ENCODE measurements at regions of chr17 and their contacts with region 1.

Region 1: DNA sequence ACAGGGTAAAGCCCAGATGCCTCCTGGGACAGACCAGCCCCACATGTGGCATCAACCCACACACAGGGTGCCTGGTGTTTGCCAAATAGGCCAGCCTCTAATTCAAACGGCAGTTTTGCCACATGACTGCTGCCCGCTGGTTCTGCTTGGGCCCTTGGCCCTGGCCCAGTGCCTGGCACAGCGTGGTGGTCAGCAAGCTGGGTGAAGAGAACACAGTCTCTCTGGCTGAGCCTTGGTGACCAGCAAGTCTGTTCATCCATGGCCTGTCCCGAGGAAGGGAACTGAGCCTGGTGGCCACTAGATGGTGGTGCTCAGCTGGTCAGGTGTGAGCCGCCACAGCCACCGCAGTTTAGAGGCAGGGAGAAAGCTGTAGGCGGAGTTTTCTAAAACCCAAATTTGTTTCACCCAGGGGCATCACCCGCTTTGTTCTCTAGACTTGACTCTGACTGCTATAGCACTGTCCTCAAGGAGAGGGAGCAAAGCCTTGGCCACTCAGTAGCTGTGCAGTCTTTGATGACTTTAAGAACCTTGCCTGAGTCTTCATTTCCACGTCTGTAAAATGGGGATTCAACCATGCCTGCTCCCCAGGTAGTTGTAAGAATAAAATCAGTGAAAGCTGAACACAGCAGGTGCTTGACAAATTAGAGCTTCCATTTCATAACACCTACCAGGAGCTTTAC is 4.7 kb upstream of the GFAP start:
- DNase-seq: peak; percentile 84 to 86
- H3K4me3 ChIP-seq: no peak overlapping the region
- H3K4me3 Mint-ChIP-seq: no peak overlapping the region
- H3K27ac Mint-ChIP-seq: no peak overlapping the region
- H3K4me1 ChIP-seq: peaks cover 6% of the 10 kb centered on the region; the same call in 1 of the 2 replicates
- H3K4me1 Mint-ChIP-seq: no peaks in the 10 kb centered on the region
- H3K27me3 ChIP-seq: no peaks in the 10 kb centered on the region
- H3K27me3 Mint-ChIP-seq: peaks cover 6% of the 10 kb centered on the region
- CTCF ChIP-seq: peak; percentile 77 to 89

Region 2: GRCh38 chr17:44812263-44812662 is 107.8 kb before region 1 on chr17:
- CTCF ChIA-PET with region 1: no interaction called
- POLR2A ChIA-PET with region 1: no interaction called
- intact Hi-C with region 1: no loop called
- DNase-seq: no peak
- H3K4me3 ChIP-seq: no peak overlapping the region
- H3K4me3 Mint-ChIP-seq: no peak overlapping the region
- H3K27ac Mint-ChIP-seq: no peak overlapping the region
- H3K4me1 ChIP-seq: no peaks in the 10 kb centered on the region
- H3K4me1 Mint-ChIP-seq: no peaks in the 10 kb centered on the region
- H3K27me3 ChIP-seq: no peaks in the 10 kb centered on the region
- H3K27me3 Mint-ChIP-seq: no peaks in the 10 kb centered on the region
- CTCF ChIP-seq: no peak

Region 3: GRCh38 chr17:44952946-44953475 is 33.0 kb after region 1 on chr17:
- CTCF ChIA-PET with region 1: interaction called, 18 read pairs
- POLR2A ChIA-PET with region 1: no interaction called
- intact Hi-C with region 1: no loop called
- DNase-seq: no peak
- H3K4me3 ChIP-seq: no peak overlapping the region
- H3K4me3 Mint-ChIP-seq: no peak overlapping the region
- H3K27ac Mint-ChIP-seq: no peak overlapping the region
- H3K4me1 ChIP-seq: peaks cover 14% of the 10 kb centered on the region
- H3K4me1 Mint-ChIP-seq: no peaks in the 10 kb centered on the region
- H3K27me3 ChIP-seq: no peaks in the 10 kb centered on the region
- H3K27me3 Mint-ChIP-seq: no peaks in the 10 kb centered on the region
- CTCF ChIP-seq: no peak

Region 4: GRCh38 chr17:44968226-44969143 is 48.5 kb after region 1 on chr17 and contains the start of gene C1QL1:
- CTCF ChIA-PET with region 1: interaction called, 3 read pairs
- POLR2A ChIA-PET with region 1: interaction called, 12 read pairs
- intact Hi-C with region 1: loop called (anchors 5 kb)
- DNase-seq: peak; percentile 93 to 96
- H3K4me3 ChIP-seq: peak within 1 kb of the TSS; percentile 52
- H3K4me3 Mint-ChIP-seq: peak within 1 kb of the TSS; percentile 77
- H3K27ac Mint-ChIP-seq: no peak within 1 kb of the TSS
- H3K4me1 ChIP-seq: peaks cover 6% of the 10 kb centered on the region
- H3K4me1 Mint-ChIP-seq: no peaks in the 10 kb centered on the region
- H3K27me3 ChIP-seq: peaks cover 1% of the 10 kb centered on the region; the same call in 1 of the 2 replicates
- H3K27me3 Mint-ChIP-seq: peaks cover 15% of the 10 kb centered on the region
- CTCF ChIP-seq: peak; percentile 30 to 63
- total RNA-seq, gene C1QL1: 2.5 and 5.2 TPM in 2 replicates

Region 5: GRCh38 chr17:45098869-45099616 is 179.0 kb after region 1 on chr17:
- CTCF ChIA-PET with region 1: interaction called, 6 read pairs
- POLR2A ChIA-PET with region 1: no interaction called
- intact Hi-C with region 1: loop called (anchors 1 kb)
- DNase-seq: peak; percentile 89 to 93
- H3K4me3 ChIP-seq: no peak overlapping the region
- H3K4me3 Mint-ChIP-seq: no peak overlapping the region
- H3K27ac Mint-ChIP-seq: no peak overlapping the region
- H3K4me1 ChIP-seq: peaks cover 5% of the 10 kb centered on the region; the same call in 1 of the 2 replicates
- H3K4me1 Mint-ChIP-seq: peaks cover 7% of the 10 kb centered on the region
- H3K27me3 ChIP-seq: no peaks in the 10 kb centered on the region
- H3K27me3 Mint-ChIP-seq: no peaks in the 10 kb centered on the region
- CTCF ChIP-seq: peak; percentile 91 to 92

Measured in Caco-2 (cell line).